ENCODE measurements at regions of chr10 and their contacts with region 1.

Region 1: DNA sequence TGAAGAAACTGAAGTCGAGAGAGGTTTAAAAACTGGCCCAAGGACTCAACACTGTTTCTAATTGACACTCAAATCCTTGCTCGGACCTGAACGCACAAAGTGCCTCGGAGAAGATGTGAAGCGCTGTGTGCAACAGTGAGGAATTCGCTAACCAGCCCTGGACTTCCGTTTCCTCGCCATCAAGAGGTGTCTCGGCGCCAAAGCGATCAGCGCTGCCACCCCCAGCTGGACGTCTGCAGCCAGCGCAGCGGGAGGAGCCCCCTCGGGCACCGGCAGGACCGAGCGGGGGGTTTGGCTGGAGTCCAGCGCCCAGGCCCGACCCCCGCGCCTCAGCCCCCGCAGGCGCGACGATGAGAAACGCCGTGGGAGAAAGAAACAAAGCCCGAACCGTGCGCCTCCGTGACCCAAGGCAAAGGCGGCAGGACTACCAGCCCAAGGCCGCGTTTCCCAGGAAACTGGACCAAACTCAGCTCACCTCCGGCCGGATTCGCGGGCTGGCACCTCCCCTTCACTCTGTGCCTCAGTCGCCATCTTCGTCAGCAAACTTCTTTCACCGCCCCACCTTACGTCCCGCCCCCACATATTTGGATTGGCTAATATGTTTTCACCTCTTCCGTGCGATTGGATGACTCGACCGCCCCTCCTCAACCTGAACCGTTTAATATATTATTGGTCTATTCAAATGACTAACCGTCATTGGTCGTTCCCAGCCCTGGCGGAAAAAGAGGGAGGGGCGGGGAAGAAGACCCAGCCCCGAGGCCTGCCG is at the start of gene ARHGAP19:
- DNase-seq: peak; percentile 97
- ATAC-seq: peak; percentile 99
- H3K4me3 Mint-ChIP-seq: peak within 1 kb of the TSS; percentile 93
- H3K27ac Mint-ChIP-seq: peak within 1 kb of the TSS; percentile 87
- H3K4me1 Mint-ChIP-seq: peaks cover 20% of the 10 kb centered on the region
- H3K27me3 Mint-ChIP-seq: peaks cover 2% of the 10 kb centered on the region
- total RNA-seq, gene ARHGAP19: 55.9 to 70.2 TPM

Region 2: GRCh38 chr10:95561182-95562075 is 1730.9 kb before region 1 on chr10 and contains the start of gene SORBS1:
- CTCF ChIA-PET with region 1: no interaction called
- POLR2A ChIA-PET with region 1: no interaction called
- intact Hi-C with region 1: loop called in 1 of 2 experiments (anchors 5 kb)
- DNase-seq: peak; percentile 91
- ATAC-seq: peak; percentile 99
- H3K4me3 Mint-ChIP-seq: peak within 1 kb of the TSS; percentile 85
- H3K27ac Mint-ChIP-seq: no peak within 1 kb of the TSS
- H3K4me1 Mint-ChIP-seq: peaks cover 9% of the 10 kb centered on the region
- H3K27me3 Mint-ChIP-seq: peaks cover 6% of the 10 kb centered on the region
- total RNA-seq, gene SORBS1: 0.69 to 1.0 TPM

Region 3: DNA sequence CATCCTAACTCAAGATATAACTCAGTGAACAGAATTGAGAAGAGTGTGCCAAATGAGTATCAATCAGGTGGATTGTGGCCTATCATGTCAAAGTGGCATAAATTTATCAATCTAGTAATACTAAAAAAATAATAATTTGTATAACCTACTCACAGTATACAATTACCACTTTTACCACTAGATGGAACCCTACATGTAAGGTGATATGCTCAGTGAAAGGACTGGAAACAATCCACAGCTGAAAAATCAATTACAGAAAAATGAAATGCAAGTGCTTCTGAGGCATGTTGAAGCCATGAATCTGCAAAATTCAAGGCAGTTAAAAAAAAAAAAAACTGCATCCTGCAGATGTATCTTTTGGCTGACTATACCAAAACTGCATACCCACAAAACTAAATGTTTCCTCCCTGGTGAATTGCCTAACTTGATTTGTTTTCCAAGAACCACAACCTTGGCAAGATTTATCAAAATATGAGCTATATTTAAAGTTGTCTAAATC is 13.7 kb before region 1 on chr10:
- CTCF ChIA-PET with region 1: interaction called, 11 read pairs
- POLR2A ChIA-PET with region 1: no interaction called
- intact Hi-C with region 1: no loop called
- DNase-seq: no peak
- ATAC-seq: peak; percentile 64
- H3K4me3 Mint-ChIP-seq: no peak overlapping the region
- H3K27ac Mint-ChIP-seq: no peak overlapping the region
- H3K4me1 Mint-ChIP-seq: peaks cover 22% of the 10 kb centered on the region
- H3K27me3 Mint-ChIP-seq: no peaks in the 10 kb centered on the region

Region 4: GRCh38 chr10:97334370-97335175 is 42.3 kb after region 1 on chr10 and contains the start of gene FRAT2:
- CTCF ChIA-PET with region 1: interaction called, 3 read pairs
- POLR2A ChIA-PET with region 1: interaction called, 4 read pairs
- intact Hi-C with region 1: loop called (anchors 1 kb)
- DNase-seq: peak; percentile 91
- ATAC-seq: peak; percentile 85
- H3K4me3 Mint-ChIP-seq: peak within 1 kb of the TSS; percentile 83
- H3K27ac Mint-ChIP-seq: peak within 1 kb of the TSS; percentile 86
- H3K4me1 Mint-ChIP-seq: peaks cover 40% of the 10 kb centered on the region
- H3K27me3 Mint-ChIP-seq: no peaks in the 10 kb centered on the region
- total RNA-seq, gene FRAT2: 3.0 to 4.3 TPM

Region 5: GRCh38 chr10:97388152-97388551 is 95.9 kb after region 1 on chr10:
- CTCF ChIA-PET with region 1: no interaction called
- POLR2A ChIA-PET with region 1: no interaction called
- intact Hi-C with region 1: no loop called
- DNase-seq: no peak
- ATAC-seq: no peak
- H3K4me3 Mint-ChIP-seq: no peak overlapping the region
- H3K27ac Mint-ChIP-seq: no peak overlapping the region
- H3K4me1 Mint-ChIP-seq: no peaks in the 10 kb centered on the region
- H3K27me3 Mint-ChIP-seq: no peaks in the 10 kb centered on the region

Region 6: GRCh38 chr10:97445722-97446639 is 153.7 kb after region 1 on chr10 and contains the starts of genes EXOSC1 and ZDHHC16:
- CTCF ChIA-PET with region 1: no interaction called
- POLR2A ChIA-PET with region 1: no interaction called
- intact Hi-C with region 1: loop called in 1 of 2 experiments (anchors 1 kb)
- DNase-seq: peak; percentile 96
- ATAC-seq: peak; percentile 91
- H3K4me3 Mint-ChIP-seq: peak within 1 kb of the TSS; percentile 86
- H3K27ac Mint-ChIP-seq: peak within 1 kb of the TSS; percentile 90
- H3K4me1 Mint-ChIP-seq: peaks cover 55% of the 10 kb centered on the region
- H3K27me3 Mint-ChIP-seq: no peaks in the 10 kb centered on the region
- total RNA-seq, gene EXOSC1: 52.3 to 54.2 TPM
- total RNA-seq, gene ZDHHC16: 34.6 to 42.8 TPM

Region 7: GRCh38 chr10:98134431-98135221 is 842.3 kb after region 1 on chr10 and contains the start of gene R3HCC1L:
- CTCF ChIA-PET with region 1: no interaction called
- POLR2A ChIA-PET with region 1: no interaction called
- intact Hi-C with region 1: loop called in 1 of 2 experiments (anchors 10 kb)
- DNase-seq: peak; percentile 97
- ATAC-seq: peak; percentile 95
- H3K4me3 Mint-ChIP-seq: peak within 1 kb of the TSS; percentile 86
- H3K27ac Mint-ChIP-seq: peak within 1 kb of the TSS; percentile 93
- H3K4me1 Mint-ChIP-seq: peaks cover 44% of the 10 kb centered on the region
- H3K27me3 Mint-ChIP-seq: no peaks in the 10 kb centered on the region
- total RNA-seq, gene R3HCC1L: 13.5 to 16.8 TPM

Measured in activated CD4-positive, alpha-beta T cell treated with anti-CD3 and anti-CD28 coated beads for 36 hours (primary cell).